ENCODE measurements at regions of chr3 and their contacts with region 1.

Region 1: DNA sequence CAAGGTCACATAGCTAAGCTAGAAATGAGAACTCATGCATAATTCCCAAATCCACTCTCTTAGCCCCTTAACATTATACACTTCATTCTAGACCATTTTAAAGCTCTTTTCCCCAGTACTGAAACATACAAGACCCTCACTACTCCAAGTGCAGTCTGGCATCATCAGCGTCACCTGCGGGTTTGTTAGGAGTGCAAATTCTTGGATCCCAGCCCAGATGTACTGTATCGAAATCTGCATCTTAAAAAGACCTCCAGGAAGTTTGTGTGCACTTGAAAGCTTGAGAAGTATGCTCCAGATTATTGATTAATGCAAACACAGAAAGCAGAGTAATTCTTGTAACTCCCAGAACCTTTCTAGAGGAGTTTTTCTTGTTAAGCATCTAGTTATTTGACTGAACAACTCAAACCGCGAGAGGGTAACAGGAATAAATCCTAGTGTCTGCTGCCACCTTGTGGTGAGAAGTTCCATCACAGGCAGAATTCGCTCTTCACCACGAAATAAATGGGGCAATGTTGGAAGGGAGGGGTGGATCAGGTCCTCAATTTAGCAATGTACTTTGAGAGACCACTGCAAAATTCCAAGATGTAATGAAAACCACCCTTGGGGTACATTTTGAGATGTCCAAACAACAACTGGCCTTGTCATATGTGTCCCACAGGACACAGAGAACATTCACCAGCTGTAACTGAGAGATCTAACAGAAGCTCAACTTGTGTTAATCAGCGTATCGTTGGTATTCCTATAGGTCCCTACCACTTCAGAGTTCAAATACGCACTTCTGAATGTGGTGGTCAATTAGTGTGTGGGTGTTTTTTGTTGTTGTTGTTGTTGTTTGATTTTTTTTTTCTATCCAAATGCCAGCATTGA is 583 bp upstream of the C3orf49 start:
- DNase-seq: peak; percentile 41 to 58 (median 48)
- H3K4me3 ChIP-seq: no peak overlapping the region
- H3K4me3 Mint-ChIP-seq: no peak overlapping the region
- H3K27ac ChIP-seq: no peak overlapping the region
- H3K27ac Mint-ChIP-seq: no peak overlapping the region
- H3K4me1 ChIP-seq: no peaks in the 10 kb centered on the region
- H3K4me1 Mint-ChIP-seq: peaks cover 0 to 5% (median 2%) of the 10 kb centered on the region in 4 donors
- H3K27me3 ChIP-seq: no peaks in the 10 kb centered on the region
- H3K27me3 Mint-ChIP-seq: no peaks in the 10 kb centered on the region

Region 2: GRCh38 chr3:62332835-62333244 is 1485.7 kb before region 1 on chr3:
- CTCF ChIA-PET with region 1: interaction called, 3 read pairs
- POLR2A ChIA-PET with region 1: no interaction called
- intact Hi-C with region 1: loop called (anchors 1 kb)
- DNase-seq: peak in 1 of 5 donors; percentile 4
- H3K4me3 ChIP-seq: no peak overlapping the region
- H3K4me3 Mint-ChIP-seq: no peak overlapping the region
- H3K27ac ChIP-seq: no peak overlapping the region
- H3K27ac Mint-ChIP-seq: no peak overlapping the region
- H3K4me1 ChIP-seq: no peaks in the 10 kb centered on the region
- H3K4me1 Mint-ChIP-seq: no peaks in the 10 kb centered on the region
- H3K27me3 ChIP-seq: no peaks in the 10 kb centered on the region
- H3K27me3 Mint-ChIP-seq: no peaks in the 10 kb centered on the region

Region 3: GRCh38 chr3:63349583-63350521 is 468.7 kb before region 1 on chr3:
- CTCF ChIA-PET with region 1: interaction called, 47 read pairs
- POLR2A ChIA-PET with region 1: no interaction called
- intact Hi-C with region 1: loop called (anchors 1 kb)
- DNase-seq: peak in 1 of 5 donors; percentile 17
- H3K4me3 ChIP-seq: no peak overlapping the region
- H3K4me3 Mint-ChIP-seq: no peak overlapping the region
- H3K27ac ChIP-seq: no peak overlapping the region
- H3K27ac Mint-ChIP-seq: no peak overlapping the region
- H3K4me1 ChIP-seq: no peaks in the 10 kb centered on the region
- H3K4me1 Mint-ChIP-seq: peaks cover 0 to 2% (median 0%) of the 10 kb centered on the region in 4 donors
- H3K27me3 ChIP-seq: no peaks in the 10 kb centered on the region
- H3K27me3 Mint-ChIP-seq: peaks cover 9 to 14% of the 10 kb centered on the region in 2 donors

Region 4: DNA sequence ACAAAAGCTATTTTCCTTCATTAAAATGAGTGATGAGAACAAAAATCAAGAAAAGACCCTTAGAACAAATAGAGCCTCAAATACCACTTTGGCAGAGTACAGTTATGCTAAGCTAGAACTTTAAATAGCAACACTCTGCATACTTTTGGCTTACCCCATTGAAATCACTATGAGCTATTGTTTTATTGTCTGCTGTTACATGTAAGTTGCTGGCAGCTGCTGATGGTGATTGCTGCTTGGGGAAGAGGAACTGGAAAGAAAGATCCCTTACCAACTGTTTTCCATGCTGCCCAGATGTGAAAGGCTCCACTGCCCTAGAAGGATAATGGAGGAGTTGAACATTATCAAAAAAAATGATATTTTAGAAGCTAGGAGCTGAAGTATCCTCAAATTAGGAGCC is 405.0 kb before region 1 on chr3:
- CTCF ChIA-PET with region 1: no interaction called
- POLR2A ChIA-PET with region 1: no interaction called
- intact Hi-C with region 1: no loop called
- DNase-seq: no peak
- H3K4me3 ChIP-seq: no peak overlapping the region
- H3K4me3 Mint-ChIP-seq: no peak overlapping the region
- H3K27ac ChIP-seq: no peak overlapping the region
- H3K27ac Mint-ChIP-seq: no peak overlapping the region
- H3K4me1 ChIP-seq: no peaks in the 10 kb centered on the region
- H3K4me1 Mint-ChIP-seq: no peaks in the 10 kb centered on the region
- H3K27me3 ChIP-seq: no peaks in the 10 kb centered on the region
- H3K27me3 Mint-ChIP-seq: no peaks in the 10 kb centered on the region

Region 5: DNA sequence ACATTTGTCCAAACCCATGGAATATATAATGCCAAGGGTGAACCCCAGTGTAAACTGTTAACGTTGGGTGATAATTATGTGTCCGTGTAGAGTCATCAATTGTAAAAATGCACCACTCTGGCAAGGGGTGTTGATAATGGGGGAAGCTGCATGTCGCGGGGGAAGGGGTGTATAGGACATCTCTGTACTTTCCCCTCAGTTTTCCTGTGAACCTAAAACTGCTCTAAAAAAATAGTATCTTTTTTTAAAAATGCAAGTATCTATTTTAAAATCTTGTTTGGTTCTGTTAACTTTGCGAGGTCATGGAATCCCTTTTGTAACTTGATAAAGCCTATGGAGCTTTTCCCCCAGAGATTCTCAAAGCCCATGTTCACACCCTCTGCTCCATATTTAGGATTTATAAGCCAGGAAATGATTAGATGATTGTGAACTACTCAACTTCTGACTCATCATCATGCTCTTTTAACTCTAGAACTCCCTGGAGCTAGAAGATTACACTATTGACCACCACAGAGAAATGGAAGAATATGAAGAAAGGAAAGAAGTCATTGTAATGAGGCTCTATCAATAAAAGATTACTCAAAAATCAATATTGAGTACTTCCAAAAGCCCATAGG is 55.5 kb before region 1 on chr3:
- CTCF ChIA-PET with region 1: no interaction called
- POLR2A ChIA-PET with region 1: no interaction called
- intact Hi-C with region 1: no loop called
- DNase-seq: no peak
- H3K4me3 ChIP-seq: no peak overlapping the region
- H3K4me3 Mint-ChIP-seq: no peak overlapping the region
- H3K27ac ChIP-seq: no peak overlapping the region
- H3K27ac Mint-ChIP-seq: no peak overlapping the region
- H3K4me1 ChIP-seq: no peaks in the 10 kb centered on the region
- H3K4me1 Mint-ChIP-seq: no peaks in the 10 kb centered on the region
- H3K27me3 ChIP-seq: peaks cover 4% of the 10 kb centered on the region
- H3K27me3 Mint-ChIP-seq: peaks cover 2 to 6% of the 10 kb centered on the region in 2 donors

Measured in CD4-positive, alpha-beta memory T cell (primary cell).